ENCODE measurements at regions of chr11 and their contacts with region 1.

Region 1: GRCh38 chr11:73177778-73178577 is 35.9 kb upstream of the FCHSD2 start:
- DNase-seq: peak; percentile 85
- ATAC-seq: peak; percentile 99
- H3K4me3 Mint-ChIP-seq: no peak overlapping the region
- H3K27ac Mint-ChIP-seq: no peak overlapping the region
- H3K4me1 Mint-ChIP-seq: no peaks in the 10 kb centered on the region
- H3K27me3 Mint-ChIP-seq: no peaks in the 10 kb centered on the region
- CTCF ChIP-seq: peak; percentile 78

Region 2: GRCh38 chr11:72831513-72832300 is 346.3 kb before region 1 on chr11:
- CTCF ChIA-PET with region 1: interaction called, 43 read pairs
- POLR2A ChIA-PET with region 1: interaction called, 3 read pairs
- intact Hi-C with region 1: loop called (anchors 10 kb)
- DNase-seq: peak; percentile 48
- ATAC-seq: peak; percentile 60
- H3K4me3 Mint-ChIP-seq: no peak overlapping the region
- H3K27ac Mint-ChIP-seq: peak overlapping the region; percentile 33
- H3K4me1 Mint-ChIP-seq: peaks cover 14% of the 10 kb centered on the region
- H3K27me3 Mint-ChIP-seq: no peaks in the 10 kb centered on the region
- CTCF ChIP-seq: peak; percentile 55

Region 3: GRCh38 chr11:72856551-72857345 is 321.2 kb before region 1 on chr11:
- CTCF ChIA-PET with region 1: interaction called, 15 read pairs
- POLR2A ChIA-PET with region 1: no interaction called
- intact Hi-C with region 1: no loop called
- DNase-seq: no peak
- ATAC-seq: no peak
- H3K4me3 Mint-ChIP-seq: no peak overlapping the region
- H3K27ac Mint-ChIP-seq: no peak overlapping the region
- H3K4me1 Mint-ChIP-seq: no peaks in the 10 kb centered on the region
- H3K27me3 Mint-ChIP-seq: no peaks in the 10 kb centered on the region
- CTCF ChIP-seq: no peak

Region 4: GRCh38 chr11:73141848-73142286 is 36.1 kb before region 1 on chr11:
- CTCF ChIA-PET with region 1: interaction called, 23 read pairs
- POLR2A ChIA-PET with region 1: no interaction called
- intact Hi-C with region 1: no loop called
- DNase-seq: peak; percentile 72
- ATAC-seq: peak; percentile 17
- H3K4me3 Mint-ChIP-seq: peak overlapping the region; percentile 98
- H3K27ac Mint-ChIP-seq: peak overlapping the region; percentile 94
- H3K4me1 Mint-ChIP-seq: peaks cover 40% of the 10 kb centered on the region
- H3K27me3 Mint-ChIP-seq: no peaks in the 10 kb centered on the region
- CTCF ChIP-seq: no peak

Region 5: GRCh38 chr11:73164803-73165540 is 13.0 kb before region 1 on chr11:
- CTCF ChIA-PET with region 1: interaction called, 43 read pairs
- POLR2A ChIA-PET with region 1: interaction called, 3 read pairs
- intact Hi-C with region 1: no loop called
- DNase-seq: no peak
- ATAC-seq: no peak
- H3K4me3 Mint-ChIP-seq: no peak overlapping the region
- H3K27ac Mint-ChIP-seq: no peak overlapping the region
- H3K4me1 Mint-ChIP-seq: no peaks in the 10 kb centered on the region
- H3K27me3 Mint-ChIP-seq: no peaks in the 10 kb centered on the region
- CTCF ChIP-seq: no peak